Mammary epithelial cell (primary cell): ENCODE measurements at regions of chr1 and their contacts with region 1.

Region 1: GRCh38 chr1:89524369-89525168 is at the start of gene LRRC8B:
- DNase-seq: peak; percentile 79
- H3K4me3 ChIP-seq: peak within 1 kb of the TSS; percentile 81 to 84 (median 81)
- H3K27ac ChIP-seq: no peak within 1 kb of the TSS
- H3K4me1 ChIP-seq: peaks cover 15% of the 10 kb centered on the region
- H3K27me3 ChIP-seq: no peaks in the 10 kb centered on the region
- CTCF ChIP-seq: no peak
- total RNA-seq, gene LRRC8B: 3.8 to 5.2 TPM

Region 2: DNA sequence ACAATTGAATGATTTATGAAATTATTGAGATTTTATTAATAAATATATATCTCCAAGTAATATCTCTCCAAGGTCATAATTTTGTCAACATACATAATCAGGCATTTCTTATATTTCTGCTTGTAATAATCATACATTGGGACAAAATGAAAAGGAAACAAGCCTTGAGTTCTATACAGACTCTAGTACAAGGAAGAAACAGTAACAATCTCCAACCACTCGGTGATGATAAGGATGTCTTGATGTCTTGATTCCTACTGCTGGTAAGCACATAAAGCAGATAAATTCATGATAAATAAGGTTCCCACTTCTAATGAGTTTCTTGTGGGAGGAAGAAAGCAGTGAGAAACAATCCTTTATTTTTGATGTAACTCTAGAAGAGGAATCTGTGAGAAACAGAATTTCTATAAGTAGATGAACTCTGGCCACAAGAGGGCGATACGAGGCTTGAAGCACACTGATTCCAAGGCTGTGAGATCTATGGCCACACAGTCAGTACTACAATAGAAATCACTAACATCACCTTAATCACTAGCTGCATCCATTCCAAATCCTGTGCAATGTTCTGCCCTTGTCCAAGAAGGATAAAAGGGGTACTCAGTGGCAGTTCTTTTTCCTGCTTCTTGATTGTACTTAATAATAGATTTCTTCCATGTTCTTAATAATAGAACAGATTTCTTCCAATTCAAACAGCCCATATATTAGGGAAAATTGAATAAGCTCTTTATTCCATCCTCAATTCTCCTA is 41.4 kb before region 1 on chr1:
- CTCF ChIA-PET with region 1: no interaction called
- dilution Hi-C with region 1: no loop called
- in situ Hi-C with region 1: no loop called
- intact Hi-C with region 1: loop called (anchors 5 kb)
- DNase-seq: peak; percentile 62
- H3K4me3 ChIP-seq: no peak overlapping the region
- H3K27ac ChIP-seq: no peak overlapping the region
- H3K4me1 ChIP-seq: no peaks in the 10 kb centered on the region
- H3K27me3 ChIP-seq: no peaks in the 10 kb centered on the region
- CTCF ChIP-seq: peak; percentile 65 to 83

Region 3: GRCh38 chr1:89545264-89546038 is 20.9 kb after region 1 on chr1:
- CTCF ChIA-PET with region 1: no interaction called
- dilution Hi-C with region 1: no loop called
- in situ Hi-C with region 1: no loop called
- intact Hi-C with region 1: loop called (anchors 1 kb)
- DNase-seq: peak; percentile 46
- H3K4me3 ChIP-seq: no peak overlapping the region
- H3K27ac ChIP-seq: no peak overlapping the region
- H3K4me1 ChIP-seq: peaks cover 31% of the 10 kb centered on the region
- H3K27me3 ChIP-seq: no peaks in the 10 kb centered on the region
- CTCF ChIP-seq: no peak

Region 4: GRCh38 chr1:89598450-89599331 is 74.1 kb after region 1 on chr1:
- CTCF ChIA-PET with region 1: interaction called, 16 read pairs
- dilution Hi-C with region 1: no loop called
- in situ Hi-C with region 1: loop called (anchors 5 to 25 kb)
- intact Hi-C with region 1: loop called (anchors 1 kb)
- DNase-seq: peak; percentile 29
- H3K4me3 ChIP-seq: no peak overlapping the region
- H3K27ac ChIP-seq: no peak overlapping the region
- H3K4me1 ChIP-seq: peaks cover 4% of the 10 kb centered on the region
- H3K27me3 ChIP-seq: no peaks in the 10 kb centered on the region
- CTCF ChIP-seq: peak; percentile 61 to 66

Region 5: DNA sequence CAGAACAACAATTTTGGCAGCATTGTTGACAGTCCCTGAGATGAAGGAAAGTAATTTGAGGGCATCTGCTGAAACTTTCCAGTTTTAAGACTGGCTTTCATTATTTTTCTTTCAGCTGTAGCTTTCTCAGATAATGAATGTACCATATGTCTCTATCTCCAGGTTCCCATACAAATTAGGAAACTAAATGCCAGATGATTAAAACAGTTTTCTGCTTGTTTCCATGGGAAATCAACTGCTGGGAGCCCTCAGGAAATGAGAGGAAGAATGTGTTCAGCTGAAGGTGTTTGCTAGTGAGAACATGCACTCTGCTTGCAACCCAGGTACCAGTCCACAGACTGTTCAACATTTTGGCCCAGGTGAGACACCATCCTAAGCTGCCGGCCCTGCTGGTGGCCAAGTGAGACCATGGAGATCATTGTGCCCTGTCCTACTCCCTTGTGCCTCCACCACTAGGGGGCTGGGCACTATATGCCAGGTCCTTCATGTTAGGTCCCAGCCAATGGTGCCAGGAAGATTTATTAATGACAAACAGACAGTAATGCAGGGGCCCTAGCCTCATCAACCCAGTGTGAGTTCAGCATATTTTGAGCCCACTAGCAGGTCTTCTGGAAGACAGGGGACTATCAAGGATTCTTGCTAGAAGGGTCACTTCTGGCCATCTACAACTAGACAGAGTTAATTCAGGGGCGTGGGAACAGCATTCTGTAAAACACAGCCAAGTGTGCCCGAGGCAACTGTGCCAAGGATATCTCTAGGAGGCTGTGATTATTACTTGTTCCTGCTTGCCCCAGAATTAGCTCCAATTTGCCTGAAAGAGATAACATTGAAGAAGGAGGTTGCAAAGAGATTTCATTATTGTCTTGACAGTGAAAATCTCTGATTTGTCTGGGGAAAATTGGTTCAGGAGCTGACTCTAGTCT is 91.4 kb after region 1 on chr1:
- CTCF ChIA-PET with region 1: no interaction called
- dilution Hi-C with region 1: no loop called
- in situ Hi-C with region 1: loop called in 1 of 2 experiments (anchors 25 kb)
- intact Hi-C with region 1: no loop called
- DNase-seq: peak; percentile 57
- H3K4me3 ChIP-seq: no peak overlapping the region
- H3K27ac ChIP-seq: no peak overlapping the region
- H3K4me1 ChIP-seq: peaks cover 17% of the 10 kb centered on the region
- H3K27me3 ChIP-seq: no peaks in the 10 kb centered on the region
- CTCF ChIP-seq: peak; percentile 43 to 47

Region 6: GRCh38 chr1:89632657-89633247 is 108.2 kb after region 1 on chr1 and contains the start of gene LRRC8C:
- CTCF ChIA-PET with region 1: no interaction called
- dilution Hi-C with region 1: no loop called
- in situ Hi-C with region 1: no loop called
- intact Hi-C with region 1: no loop called
- DNase-seq: peak; percentile 65
- H3K4me3 ChIP-seq: peak within 1 kb of the TSS; percentile 80 to 96 (median 92)
- H3K27ac ChIP-seq: peak within 1 kb of the TSS; percentile 60
- H3K4me1 ChIP-seq: peaks cover 28% of the 10 kb centered on the region
- H3K27me3 ChIP-seq: no peaks in the 10 kb centered on the region
- CTCF ChIP-seq: peak in 1 of 2 donors; percentile 37
- total RNA-seq, gene LRRC8C: 6.5 to 17.2 TPM

Region 7: GRCh38 chr1:89739013-89739843 is 214.7 kb after region 1 on chr1:
- CTCF ChIA-PET with region 1: no interaction called
- dilution Hi-C with region 1: no loop called
- in situ Hi-C with region 1: no loop called
- intact Hi-C with region 1: no loop called
- DNase-seq: peak; percentile 91
- H3K4me3 ChIP-seq: no peak overlapping the region
- H3K27ac ChIP-seq: peak overlapping the region; percentile 4
- H3K4me1 ChIP-seq: peaks cover 13% of the 10 kb centered on the region
- H3K27me3 ChIP-seq: no peaks in the 10 kb centered on the region
- CTCF ChIP-seq: no peak

Region 8: DNA sequence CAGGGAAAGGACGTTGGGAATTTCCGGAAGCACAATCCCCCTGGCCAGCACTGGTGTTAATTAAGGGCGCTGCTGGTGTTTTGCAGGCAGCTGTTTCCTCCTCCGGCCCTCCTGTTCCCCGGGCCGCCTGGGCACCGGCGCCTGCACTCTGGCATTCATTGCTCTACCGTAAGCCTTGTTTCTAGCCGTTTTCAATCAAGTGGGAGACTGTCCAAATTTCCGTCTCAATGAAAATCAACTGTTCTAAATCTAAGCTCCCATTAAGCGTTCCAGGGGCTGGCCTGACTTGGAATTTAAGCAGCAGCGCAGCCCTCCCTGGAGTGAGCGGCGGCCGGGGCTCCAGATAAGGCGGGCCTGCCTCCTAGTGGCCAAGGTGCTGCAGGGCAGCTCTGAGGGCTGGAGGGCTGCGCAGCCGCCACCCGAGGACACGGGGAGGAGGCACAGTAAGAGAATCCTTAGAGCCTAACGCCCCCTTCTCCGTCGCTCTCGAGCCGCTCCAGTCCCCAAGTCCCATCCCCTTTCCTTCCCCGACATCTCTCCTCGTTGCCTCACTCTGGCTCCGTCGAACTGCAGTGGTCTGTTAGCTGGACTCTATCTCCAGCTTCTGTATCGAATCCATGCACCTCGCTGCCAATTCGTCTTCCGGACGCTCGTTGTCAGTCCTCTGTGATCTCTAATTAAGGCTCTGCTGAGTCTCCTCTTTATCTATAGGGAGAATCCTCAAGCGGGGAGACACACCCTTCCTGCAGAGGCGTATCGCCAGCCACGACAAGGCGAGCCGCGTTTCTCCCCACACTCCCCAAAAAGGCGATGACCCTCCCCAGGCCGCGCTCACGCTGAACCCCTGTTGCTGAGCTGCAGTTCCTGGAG is 238.4 kb after region 1 on chr1:
- CTCF ChIA-PET with region 1: no interaction called
- dilution Hi-C with region 1: no loop called
- in situ Hi-C with region 1: no loop called
- intact Hi-C with region 1: loop called (anchors 1 kb)
- DNase-seq: peak; percentile 68
- H3K4me3 ChIP-seq: peak overlapping the region; percentile 41 to 53 (median 52)
- H3K27ac ChIP-seq: no peak overlapping the region
- H3K4me1 ChIP-seq: peaks cover 22% of the 10 kb centered on the region
- H3K27me3 ChIP-seq: no peaks in the 10 kb centered on the region
- CTCF ChIP-seq: peak; percentile 85 to 99